Activated CD4-positive, alpha-beta T cell treated with anti-CD3 and anti-CD28 coated beads, Interleukin-2, amount 10 ng/mL, durations not matched to agents 24 days and 14 days (primary cell): ENCODE measurements at regions of chr11 and their contacts with region 1.

Region 1: DNA sequence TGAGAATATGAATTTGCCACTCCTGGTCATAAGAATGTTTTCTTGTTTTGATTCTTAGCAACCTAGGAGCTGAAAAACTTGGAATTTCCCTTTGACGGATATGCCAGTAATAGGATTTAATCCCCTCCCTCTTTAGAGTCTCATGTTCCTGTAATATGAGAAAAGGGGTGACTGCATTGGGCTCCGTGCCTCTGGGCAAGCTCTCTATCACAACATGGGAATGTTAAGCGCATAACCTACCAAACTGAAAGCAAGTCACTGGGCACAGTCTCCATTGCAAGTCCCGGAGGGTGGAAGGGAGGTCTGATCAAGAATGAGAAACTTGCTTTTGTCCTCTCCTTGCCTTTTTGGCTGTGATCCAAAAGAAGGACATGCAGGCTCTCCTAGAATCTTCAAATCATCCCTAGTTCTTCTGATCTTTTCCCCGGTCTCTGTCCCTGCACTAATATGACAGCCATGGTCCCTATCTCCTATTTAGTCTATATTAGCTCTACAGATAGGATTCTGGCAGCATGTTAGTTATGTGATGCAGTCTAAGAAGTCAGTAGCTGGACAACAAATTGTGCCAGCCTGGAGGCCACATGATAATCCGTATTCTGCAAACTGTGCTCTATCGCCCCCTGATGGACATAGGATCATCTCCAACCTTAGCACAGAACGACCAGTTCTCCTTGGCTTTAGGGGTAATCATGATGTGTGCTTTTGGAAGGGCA is 11.7 kb downstream of the OR10D3 start:
- DNase-seq: peak; percentile 85
- H3K4me3 Mint-ChIP-seq: no peak overlapping the region
- H3K27ac Mint-ChIP-seq: no peak overlapping the region
- H3K4me1 Mint-ChIP-seq: no peaks in the 10 kb centered on the region
- H3K27me3 Mint-ChIP-seq: peaks cover 15% of the 10 kb centered on the region

Region 2: DNA sequence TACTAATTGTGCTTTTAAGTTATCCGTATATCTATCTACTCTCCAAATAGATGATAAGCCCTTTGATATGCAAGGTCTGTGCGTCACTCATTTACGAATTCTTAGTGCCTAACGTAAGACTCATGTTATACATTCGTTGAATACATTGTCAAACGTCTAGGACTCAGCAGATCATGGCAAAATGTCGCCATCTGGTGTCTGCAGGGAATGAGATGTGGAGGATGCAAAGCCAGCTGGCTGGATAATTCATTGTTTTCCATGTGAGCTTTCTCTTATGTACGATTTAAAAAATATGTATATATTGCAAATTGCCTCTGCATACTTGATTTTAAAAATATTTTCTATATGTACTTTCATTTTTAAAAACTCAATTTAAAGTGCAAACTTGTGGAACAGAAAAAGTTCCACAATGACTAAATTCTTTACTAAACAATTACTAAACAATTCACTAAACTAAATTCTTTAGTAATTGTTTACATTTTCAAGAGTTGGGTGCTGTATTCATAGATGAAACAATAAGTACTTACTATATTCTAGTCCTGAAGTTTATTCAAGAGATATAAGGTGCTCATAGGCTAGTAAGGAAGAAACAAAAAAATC is 487.1 kb before region 1 on chr11:
- intact Hi-C with region 1: no loop called
- DNase-seq: peak; percentile 89
- H3K4me3 Mint-ChIP-seq: no peak overlapping the region
- H3K27ac Mint-ChIP-seq: no peak overlapping the region
- H3K4me1 Mint-ChIP-seq: peaks cover 2% of the 10 kb centered on the region
- H3K27me3 Mint-ChIP-seq: peaks cover 10% of the 10 kb centered on the region

Region 3: GRCh38 chr11:124108156-124108555 is 86.7 kb before region 1 on chr11:
- intact Hi-C with region 1: loop called (anchors 1 kb)
- DNase-seq: peak; percentile 65
- H3K4me3 Mint-ChIP-seq: no peak overlapping the region
- H3K27ac Mint-ChIP-seq: no peak overlapping the region
- H3K4me1 Mint-ChIP-seq: no peaks in the 10 kb centered on the region
- H3K27me3 Mint-ChIP-seq: peaks cover 46% of the 10 kb centered on the region